CD4-positive, alpha-beta T cell (primary cell): ENCODE measurements at regions of chr12 and their contacts with region 1.

Region 1: GRCh38 chr12:95003213-95003920 is at the start of gene NDUFA12:
- DNase-seq: peak; percentile 90 to 99 (median 93)
- ATAC-seq: peak; percentile 100
- H3K4me3 ChIP-seq: peak within 1 kb of the TSS; percentile 80
- H3K4me3 Mint-ChIP-seq: peak within 1 kb of the TSS; percentile 96
- H3K27ac ChIP-seq: peak within 1 kb of the TSS; percentile 66 to 76
- H3K27ac Mint-ChIP-seq: peak within 1 kb of the TSS; percentile 87
- H3K4me1 ChIP-seq: peaks cover 29% of the 10 kb centered on the region
- H3K4me1 Mint-ChIP-seq: peaks cover 55% of the 10 kb centered on the region
- H3K27me3 ChIP-seq: no peaks in the 10 kb centered on the region
- H3K27me3 Mint-ChIP-seq: no peaks in the 10 kb centered on the region
- CTCF ChIP-seq: no peak
- total RNA-seq, gene NDUFA12: 43.3 to 43.7 TPM

Region 2: DNA sequence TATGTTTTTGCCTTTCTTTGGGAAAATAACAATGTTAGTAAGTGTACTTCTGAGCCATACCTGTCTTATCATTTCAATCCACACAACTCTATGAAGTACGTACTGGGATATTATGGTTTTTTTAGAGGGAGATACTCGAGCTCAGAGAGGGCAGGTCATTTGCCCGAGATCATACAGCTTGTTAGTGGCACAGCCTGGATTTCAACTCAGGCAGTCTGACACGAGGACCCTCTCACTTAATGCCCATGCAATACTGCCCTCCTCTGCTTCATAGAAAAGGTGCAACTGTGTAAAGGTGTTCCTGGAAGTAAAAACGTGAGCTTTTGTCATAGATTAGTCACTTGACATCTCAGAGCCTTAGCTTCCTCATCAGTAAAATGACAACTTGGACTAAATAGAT is 127.8 kb before region 1 on chr12:
- CTCF ChIA-PET with region 1: no interaction called
- POLR2A ChIA-PET with region 1: no interaction called
- intact Hi-C with region 1: no loop called
- DNase-seq: peak in 3 of 14 experiments; percentile 6 to 29 (median 21)
- ATAC-seq: peak; percentile 48
- H3K4me3 ChIP-seq: no peak overlapping the region
- H3K4me3 Mint-ChIP-seq: no peak overlapping the region
- H3K27ac ChIP-seq: no peak overlapping the region
- H3K27ac Mint-ChIP-seq: no peak overlapping the region
- H3K4me1 ChIP-seq: peaks cover 18% of the 10 kb centered on the region
- H3K4me1 Mint-ChIP-seq: peaks cover 18% of the 10 kb centered on the region
- H3K27me3 ChIP-seq: peaks cover 45 to 54% of the 10 kb centered on the region in 2 experiments
- H3K27me3 Mint-ChIP-seq: peaks cover 82% of the 10 kb centered on the region
- CTCF ChIP-seq: no peak

Region 3: GRCh38 chr12:94980577-94980976 is 22.8 kb before region 1 on chr12:
- CTCF ChIA-PET with region 1: interaction called, 3 read pairs
- POLR2A ChIA-PET with region 1: interaction called, 14 read pairs
- intact Hi-C with region 1: loop called in 1 of 2 experiments (anchors 2 kb)
- DNase-seq: peak in 3 of 14 experiments; percentile 35 to 65 (median 61)
- ATAC-seq: peak; percentile 87
- H3K4me3 ChIP-seq: no peak overlapping the region
- H3K4me3 Mint-ChIP-seq: peak overlapping the region; percentile 49
- H3K27ac ChIP-seq: no peak overlapping the region
- H3K27ac Mint-ChIP-seq: peak overlapping the region; percentile 84
- H3K4me1 ChIP-seq: peaks cover 44% of the 10 kb centered on the region
- H3K4me1 Mint-ChIP-seq: peaks cover 62% of the 10 kb centered on the region
- H3K27me3 ChIP-seq: no peaks in the 10 kb centered on the region
- H3K27me3 Mint-ChIP-seq: no peaks in the 10 kb centered on the region
- CTCF ChIP-seq: peak; percentile 50

Region 4: GRCh38 chr12:95072900-95073697 is 69.7 kb after region 1 on chr12 and contains the start of gene NR2C1:
- CTCF ChIA-PET with region 1: interaction called, 10 read pairs
- POLR2A ChIA-PET with region 1: interaction called, 8 read pairs
- intact Hi-C with region 1: loop called in 1 of 2 experiments (anchors 5 kb)
- DNase-seq: peak; percentile 85 to 97 (median 90)
- ATAC-seq: peak; percentile 98
- H3K4me3 ChIP-seq: peak within 1 kb of the TSS; percentile 84
- H3K4me3 Mint-ChIP-seq: peak within 1 kb of the TSS; percentile 98
- H3K27ac ChIP-seq: peak within 1 kb of the TSS; percentile 62 to 72
- H3K27ac Mint-ChIP-seq: peak within 1 kb of the TSS; percentile 89
- H3K4me1 ChIP-seq: peaks cover 17% of the 10 kb centered on the region
- H3K4me1 Mint-ChIP-seq: peaks cover 23% of the 10 kb centered on the region
- H3K27me3 ChIP-seq: no peaks in the 10 kb centered on the region
- H3K27me3 Mint-ChIP-seq: no peaks in the 10 kb centered on the region
- CTCF ChIP-seq: no peak
- total RNA-seq, gene NR2C1: 48.3 to 58.9 TPM

Region 5: DNA sequence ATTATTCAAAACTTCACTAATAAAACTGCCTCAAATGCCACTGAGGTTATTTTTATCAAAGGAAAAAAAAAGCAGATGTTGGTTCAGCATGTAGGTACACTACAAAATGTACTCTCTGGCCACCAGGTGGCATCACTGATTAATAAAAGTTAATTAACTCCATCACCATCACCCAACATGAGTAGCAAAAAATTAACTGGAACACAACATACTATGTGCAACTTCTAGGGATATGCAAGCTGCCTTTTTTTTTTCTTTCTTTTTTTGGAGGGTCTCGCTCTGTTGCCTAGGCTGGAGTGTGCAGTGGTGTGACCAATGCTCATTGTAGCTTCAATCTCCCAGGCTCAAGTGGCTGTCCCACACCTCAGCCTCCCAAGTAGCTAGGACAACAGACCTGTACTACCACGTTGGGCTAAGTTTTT is 113.8 kb after region 1 on chr12:
- CTCF ChIA-PET with region 1: no interaction called
- POLR2A ChIA-PET with region 1: no interaction called
- intact Hi-C with region 1: no loop called
- DNase-seq: peak; percentile 24 to 80 (median 50)
- ATAC-seq: peak; percentile 86
- H3K4me3 ChIP-seq: no peak overlapping the region
- H3K4me3 Mint-ChIP-seq: no peak overlapping the region
- H3K27ac ChIP-seq: no peak overlapping the region
- H3K27ac Mint-ChIP-seq: no peak overlapping the region
- H3K4me1 ChIP-seq: no peaks in the 10 kb centered on the region
- H3K4me1 Mint-ChIP-seq: no peaks in the 10 kb centered on the region
- H3K27me3 ChIP-seq: no peaks in the 10 kb centered on the region
- H3K27me3 Mint-ChIP-seq: no peaks in the 10 kb centered on the region
- CTCF ChIP-seq: peak; percentile 84

Region 6: DNA sequence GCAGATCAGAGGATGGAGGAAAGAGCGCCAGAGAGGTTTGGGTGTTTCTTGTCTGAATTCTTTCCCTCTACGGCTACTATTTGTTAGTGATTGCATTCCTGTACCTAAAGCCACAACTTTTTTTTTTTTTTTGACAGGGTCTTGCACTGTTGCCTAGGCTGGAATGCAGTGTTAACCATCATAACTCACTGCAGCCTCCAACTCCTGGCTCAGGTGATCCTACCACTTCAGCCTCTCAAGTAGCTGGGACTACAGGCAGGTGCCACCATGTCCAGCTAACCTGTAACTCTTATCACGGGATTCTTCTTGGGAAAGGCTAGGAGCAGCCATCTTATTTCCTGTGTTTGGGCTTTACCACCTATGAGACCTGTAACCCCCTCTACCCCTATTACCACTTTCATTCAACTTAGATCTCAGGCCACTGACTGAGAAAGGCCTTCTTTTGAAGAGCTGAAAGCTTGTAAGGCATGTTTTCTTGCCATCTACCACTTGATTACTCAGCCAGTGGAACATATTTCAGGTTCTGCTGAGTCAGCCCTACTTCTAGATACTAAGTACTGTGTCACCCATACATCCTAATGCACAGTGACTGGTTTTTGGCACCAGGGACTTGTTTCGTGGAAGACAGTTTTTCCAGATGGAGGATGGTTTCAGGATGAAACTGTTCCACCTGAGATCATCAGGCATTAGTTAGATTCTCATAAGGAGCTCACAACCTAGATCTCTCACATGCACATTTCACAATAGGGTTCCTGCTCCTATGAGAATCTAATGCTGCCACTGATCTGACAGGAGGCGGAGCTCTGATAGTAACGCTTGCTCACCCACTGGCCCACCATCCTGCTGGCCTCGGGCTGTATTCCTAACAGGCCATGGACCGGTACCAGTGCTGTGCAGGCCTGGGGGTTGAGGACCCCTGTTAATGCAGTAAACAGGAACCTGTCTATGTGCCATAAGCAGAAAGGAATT is 221.1 kb after region 1 on chr12:
- CTCF ChIA-PET with region 1: no interaction called
- POLR2A ChIA-PET with region 1: no interaction called
- intact Hi-C with region 1: loop called (anchors 5 to 10 kb)
- DNase-seq: no peak
- ATAC-seq: no peak
- H3K4me3 ChIP-seq: no peak overlapping the region
- H3K4me3 Mint-ChIP-seq: no peak overlapping the region
- H3K27ac ChIP-seq: no peak overlapping the region
- H3K27ac Mint-ChIP-seq: no peak overlapping the region
- H3K4me1 ChIP-seq: peaks cover 9% of the 10 kb centered on the region
- H3K4me1 Mint-ChIP-seq: peaks cover 63% of the 10 kb centered on the region
- H3K27me3 ChIP-seq: no peaks in the 10 kb centered on the region
- H3K27me3 Mint-ChIP-seq: no peaks in the 10 kb centered on the region
- CTCF ChIP-seq: no peak

Region 7: DNA sequence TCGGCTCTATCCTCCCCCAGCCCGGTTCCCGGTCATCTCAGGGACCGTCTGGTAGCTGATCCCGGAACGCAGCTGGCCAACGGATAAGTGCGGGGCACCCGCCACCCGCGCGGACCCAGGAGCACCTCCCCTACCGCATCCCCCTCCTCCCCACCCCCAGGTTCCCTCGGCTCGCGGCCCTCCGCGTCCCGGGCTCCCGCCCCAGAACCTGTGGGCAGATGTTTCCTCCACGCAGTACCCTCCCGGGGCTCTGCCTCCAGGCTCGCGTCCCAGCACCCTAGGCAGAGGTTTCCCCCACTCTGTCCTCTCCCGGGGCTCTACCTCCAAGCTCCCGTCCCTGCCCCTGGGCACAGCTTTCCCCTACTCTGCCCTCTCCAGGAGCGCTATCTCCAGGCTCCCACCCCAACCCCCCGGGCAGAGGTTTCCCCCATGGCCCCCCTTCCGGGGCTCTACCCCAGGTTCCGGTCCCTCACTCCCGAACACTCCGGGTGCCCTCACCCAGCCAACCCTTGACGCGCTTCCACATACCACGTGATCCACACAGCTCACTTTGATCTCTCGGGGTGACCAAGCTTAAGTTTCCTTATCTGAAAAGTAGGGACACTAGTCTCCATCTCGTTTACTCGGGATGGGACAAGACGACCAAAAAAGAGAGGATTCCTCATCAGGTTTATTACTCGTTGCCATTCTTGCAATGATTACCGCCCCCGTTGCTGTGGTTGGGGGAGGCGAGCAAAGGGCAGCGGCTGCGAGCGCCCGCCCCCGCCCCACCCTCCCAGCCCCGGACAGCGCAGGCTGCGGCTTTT is 939.4 kb after region 1 on chr12 and contains the start of gene CCDC38:
- CTCF ChIA-PET with region 1: no interaction called
- POLR2A ChIA-PET with region 1: interaction called, 6 read pairs
- intact Hi-C with region 1: loop called in 1 of 2 experiments (anchors 10 kb)
- DNase-seq: peak; percentile 70 to 92 (median 79)
- ATAC-seq: peak; percentile 94
- H3K4me3 ChIP-seq: peak within 1 kb of the TSS; percentile 84
- H3K4me3 Mint-ChIP-seq: peak within 1 kb of the TSS; percentile 97
- H3K27ac ChIP-seq: peak within 1 kb of the TSS; percentile 61 to 76
- H3K27ac Mint-ChIP-seq: peak within 1 kb of the TSS; percentile 88
- H3K4me1 ChIP-seq: peaks cover 14% of the 10 kb centered on the region
- H3K4me1 Mint-ChIP-seq: peaks cover 10% of the 10 kb centered on the region
- H3K27me3 ChIP-seq: no peaks in the 10 kb centered on the region
- H3K27me3 Mint-ChIP-seq: no peaks in the 10 kb centered on the region
- CTCF ChIP-seq: no peak
- total RNA-seq, gene CCDC38: 0.11 TPM in 1 of 2 experiments, not detected in the other